Dorsolateral prefrontal cortex (tissue), 120 donors: ENCODE measurements at regions of chr11 and their contacts with region 1.

Region 1: DNA sequence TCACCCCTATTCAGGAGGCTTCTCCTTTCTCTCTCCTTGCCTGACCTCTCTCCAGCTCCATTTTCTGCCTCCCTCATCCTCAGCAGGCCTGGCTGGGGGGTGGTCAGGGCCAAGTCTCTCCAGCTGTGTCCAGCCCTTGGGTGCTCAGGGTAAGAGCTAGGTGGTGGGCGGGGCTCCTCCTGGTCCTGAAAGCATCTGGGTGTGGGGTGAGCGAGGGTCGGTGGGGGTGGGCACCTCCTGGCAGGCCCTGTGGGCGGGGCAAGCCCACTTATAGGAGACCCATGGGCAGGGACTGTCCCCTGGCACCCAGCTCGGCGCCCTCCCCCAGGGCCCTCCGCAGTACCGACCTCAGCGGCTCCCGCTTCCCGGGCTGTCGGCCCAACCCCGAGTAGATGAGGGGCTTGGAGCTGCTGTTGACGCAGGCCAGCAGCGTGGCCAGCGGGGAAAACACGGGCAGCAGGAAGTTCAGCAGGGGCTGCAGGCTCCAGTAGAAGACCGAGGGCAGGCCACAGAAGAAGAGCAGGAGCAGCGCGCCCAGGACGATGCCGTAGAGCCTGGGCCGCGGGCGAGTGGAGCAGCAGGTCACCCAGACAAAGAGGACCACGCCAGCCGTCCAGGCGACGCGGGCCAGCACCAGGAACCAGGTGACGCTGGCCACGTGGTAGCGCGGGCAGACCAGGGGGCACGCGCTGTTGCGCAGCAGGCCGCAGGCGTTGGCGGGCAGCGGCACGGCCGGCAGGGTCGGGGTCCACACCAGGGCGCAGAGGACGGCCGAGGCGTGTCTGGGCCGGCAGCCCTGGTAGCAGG is 734 bp downstream of the MRGPRG start:
- DNase-seq: peak in 4 of 10 donors; percentile 16 to 44 (median 20)
- H3K4me3 ChIP-seq: no peak overlapping the region
- H3K27ac ChIP-seq: no peak overlapping the region
- H3K27me3 ChIP-seq: peaks cover 0 to 28% (median 0%) of the 10 kb centered on the region in 45 donors
- CTCF ChIP-seq: no peak

Region 2: GRCh38 chr11:2975594-2975993 is 242.3 kb before region 1 on chr11:
- intact Hi-C with region 1: loop called in 1 of 2 experiments (anchors 10 kb)
- DNase-seq: peak in 6 of 10 donors; percentile 14 to 59 (median 54)
- H3K4me3 ChIP-seq: no peak overlapping the region
- H3K27ac ChIP-seq: peak overlapping the region in 15 of 59 donors; percentile 0 to 57 (median 27)
- H3K27me3 ChIP-seq: no peaks in the 10 kb centered on the region
- CTCF ChIP-seq: peak in 55 of 56 donors; percentile 13 to 84 (median 66)

Region 3: GRCh38 chr11:3037040-3037944 is 180.6 kb before region 1 on chr11:
- intact Hi-C with region 1: loop called (anchors 2 to 5 kb)
- DNase-seq: peak; percentile 58 to 89 (median 86)
- H3K4me3 ChIP-seq: no peak overlapping the region
- H3K27ac ChIP-seq: peak overlapping the region in 58 of 59 donors; percentile 13 to 89 (median 76)
- H3K27me3 ChIP-seq: no peaks in the 10 kb centered on the region
- CTCF ChIP-seq: peak; percentile 67 to 95 (median 86)

Region 4: DNA sequence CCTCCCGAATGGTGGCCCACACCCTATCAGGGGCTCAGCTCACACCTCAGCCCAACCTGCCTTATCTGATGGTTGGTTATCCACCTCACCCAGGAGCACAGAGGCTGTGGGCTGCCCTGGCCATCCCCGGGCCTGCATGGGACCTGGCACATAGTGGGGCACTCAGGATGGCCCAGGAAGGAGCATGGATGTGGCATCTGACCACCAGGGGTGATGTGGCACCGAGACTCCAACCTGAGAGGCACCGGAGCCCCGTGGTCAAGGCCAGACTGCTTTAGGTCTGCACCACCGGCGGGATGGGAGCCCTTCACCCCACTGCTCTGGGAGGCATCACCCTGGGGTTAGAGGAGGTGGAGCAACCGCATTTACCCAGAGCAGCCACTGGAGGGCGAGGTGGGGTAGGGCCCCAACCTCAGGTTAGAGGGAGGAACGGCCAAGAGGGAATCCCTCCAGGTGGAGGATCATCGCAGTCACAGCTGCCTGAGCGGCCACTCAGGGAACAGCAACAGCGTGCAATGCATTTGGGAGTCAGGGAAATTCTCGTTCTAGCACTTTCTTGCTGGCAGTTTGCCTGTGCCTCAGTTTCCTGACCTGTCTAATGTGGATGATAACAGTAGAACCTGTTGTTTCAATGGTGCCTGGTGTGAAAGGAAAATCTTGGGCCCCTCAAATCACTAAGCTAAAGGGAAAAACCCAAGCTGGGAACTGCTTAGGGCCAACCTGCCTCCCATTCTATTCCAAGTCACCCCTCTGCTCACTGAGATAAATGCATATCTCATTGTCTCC is 107.8 kb before region 1 on chr11:
- intact Hi-C with region 1: loop called in 1 of 2 experiments (anchors 5 kb)
- DNase-seq: peak in 8 of 10 donors; percentile 9 to 44 (median 28)
- H3K4me3 ChIP-seq: no peak overlapping the region
- H3K27ac ChIP-seq: no peak overlapping the region
- H3K27me3 ChIP-seq: no peaks in the 10 kb centered on the region
- CTCF ChIP-seq: peak in 54 of 56 donors; percentile 32 to 69 (median 56)

Region 5: GRCh38 chr11:3166268-3167142 is 51.4 kb before region 1 on chr11:
- intact Hi-C with region 1: loop called in 1 of 2 experiments (anchors 2 kb)
- DNase-seq: peak in 4 of 10 donors; percentile 17 to 44 (median 36)
- H3K4me3 ChIP-seq: peak overlapping the region in 1 of 59 donors; percentile 83
- H3K27ac ChIP-seq: no peak overlapping the region
- H3K27me3 ChIP-seq: no peaks in the 10 kb centered on the region
- CTCF ChIP-seq: no peak

Region 6: DNA sequence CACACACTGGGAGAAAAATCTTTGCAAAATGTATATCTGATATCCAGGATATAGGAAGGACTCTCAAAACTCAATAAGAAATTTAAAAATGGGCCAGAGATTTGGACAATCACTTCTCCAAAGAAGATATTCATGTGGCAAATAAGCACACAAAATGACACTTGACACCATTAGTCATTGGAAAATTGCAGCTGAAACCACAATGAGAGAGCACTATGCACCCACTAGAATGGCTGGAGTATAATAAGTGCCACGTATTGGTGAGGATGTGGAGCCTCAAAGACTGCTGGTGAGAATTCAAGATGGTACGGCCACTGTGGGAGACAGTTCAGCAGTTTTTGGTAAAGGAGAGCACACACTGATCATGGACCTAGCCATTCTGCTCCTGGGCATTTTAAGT is 39.9 kb before region 1 on chr11:
- intact Hi-C with region 1: no loop called
- DNase-seq: no peak
- H3K4me3 ChIP-seq: no peak overlapping the region
- H3K27ac ChIP-seq: no peak overlapping the region
- H3K27me3 ChIP-seq: no peaks in the 10 kb centered on the region
- CTCF ChIP-seq: no peak